ENCODE measurements at regions of chr6 and their contacts with region 1.

Region 1: DNA sequence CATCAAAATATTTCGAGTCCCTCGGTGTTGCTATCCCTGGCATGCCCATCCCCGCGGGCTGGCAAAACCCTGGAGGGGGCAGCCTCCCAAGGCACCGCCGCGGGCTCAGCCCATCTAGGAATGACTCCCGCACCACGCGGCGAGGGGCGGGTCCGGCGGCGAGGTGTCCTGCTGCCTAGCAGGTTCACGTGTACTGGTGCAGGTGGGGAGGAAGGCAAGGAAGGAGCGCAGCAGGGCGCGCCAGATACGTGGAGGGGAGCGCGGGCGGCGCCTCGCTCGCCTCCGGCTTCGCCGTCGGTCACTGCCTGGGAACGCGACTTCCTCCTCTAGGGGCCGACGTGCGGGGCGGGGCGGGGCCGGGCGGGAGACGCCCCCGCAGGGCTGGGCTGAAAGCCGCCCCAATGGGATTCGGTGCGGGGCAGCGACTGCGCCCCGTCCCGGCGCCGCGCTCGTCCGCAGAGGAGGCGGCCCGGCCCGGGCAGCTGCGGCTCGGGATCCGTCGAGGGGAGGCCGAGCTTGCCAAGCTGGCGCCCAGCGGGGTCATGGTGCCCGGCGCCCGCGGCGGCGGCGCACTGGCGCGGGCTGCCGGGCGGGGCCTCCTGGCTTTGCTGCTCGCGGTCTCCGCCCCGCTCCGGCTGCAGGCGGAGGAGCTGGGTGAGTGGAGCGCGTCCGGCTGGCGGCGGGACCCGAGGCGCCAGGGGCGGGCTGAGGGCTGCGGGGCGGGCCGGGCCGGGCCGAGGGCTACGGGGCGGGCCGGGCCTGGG is at the start of gene DCBLD1:
- DNase-seq: peak; percentile 59 to 61 (median 60)
- H3K4me3 ChIP-seq: peak within 1 kb of the TSS; percentile 83 to 90 (median 88)
- H3K4me3 Mint-ChIP-seq: peak within 1 kb of the TSS; percentile 90 to 97
- H3K27ac ChIP-seq: peak within 1 kb of the TSS; percentile 49 to 69
- H3K27ac Mint-ChIP-seq: peak within 1 kb of the TSS; percentile 59 to 89 (median 78)
- H3K4me1 ChIP-seq: peaks cover 16 to 26% of the 10 kb centered on the region in 2 donors
- H3K4me1 Mint-ChIP-seq: peaks cover 24% of the 10 kb centered on the region
- H3K27me3 ChIP-seq: peaks cover 22 to 55% of the 10 kb centered on the region in 2 donors
- H3K27me3 Mint-ChIP-seq: peaks cover 53 to 61% (median 54%) of the 10 kb centered on the region in 3 donors
- CTCF ChIP-seq: no peak
- polyA plus RNA-seq, gene DCBLD1: 2.9 to 3.3 (median 3.1) TPM

Region 2: GRCh38 chr6:117089604-117090003 is 392.8 kb before region 1 on chr6:
- intact Hi-C with region 1: no loop called
- DNase-seq: no peak
- H3K4me3 ChIP-seq: no peak overlapping the region
- H3K4me3 Mint-ChIP-seq: no peak overlapping the region
- H3K27ac ChIP-seq: no peak overlapping the region
- H3K27ac Mint-ChIP-seq: no peak overlapping the region
- H3K4me1 ChIP-seq: no peaks in the 10 kb centered on the region
- H3K4me1 Mint-ChIP-seq: no peaks in the 10 kb centered on the region
- H3K27me3 ChIP-seq: no peaks in the 10 kb centered on the region
- H3K27me3 Mint-ChIP-seq: peaks cover 0 to 2% (median 0%) of the 10 kb centered on the region in 3 donors
- CTCF ChIP-seq: no peak

Region 3: DNA sequence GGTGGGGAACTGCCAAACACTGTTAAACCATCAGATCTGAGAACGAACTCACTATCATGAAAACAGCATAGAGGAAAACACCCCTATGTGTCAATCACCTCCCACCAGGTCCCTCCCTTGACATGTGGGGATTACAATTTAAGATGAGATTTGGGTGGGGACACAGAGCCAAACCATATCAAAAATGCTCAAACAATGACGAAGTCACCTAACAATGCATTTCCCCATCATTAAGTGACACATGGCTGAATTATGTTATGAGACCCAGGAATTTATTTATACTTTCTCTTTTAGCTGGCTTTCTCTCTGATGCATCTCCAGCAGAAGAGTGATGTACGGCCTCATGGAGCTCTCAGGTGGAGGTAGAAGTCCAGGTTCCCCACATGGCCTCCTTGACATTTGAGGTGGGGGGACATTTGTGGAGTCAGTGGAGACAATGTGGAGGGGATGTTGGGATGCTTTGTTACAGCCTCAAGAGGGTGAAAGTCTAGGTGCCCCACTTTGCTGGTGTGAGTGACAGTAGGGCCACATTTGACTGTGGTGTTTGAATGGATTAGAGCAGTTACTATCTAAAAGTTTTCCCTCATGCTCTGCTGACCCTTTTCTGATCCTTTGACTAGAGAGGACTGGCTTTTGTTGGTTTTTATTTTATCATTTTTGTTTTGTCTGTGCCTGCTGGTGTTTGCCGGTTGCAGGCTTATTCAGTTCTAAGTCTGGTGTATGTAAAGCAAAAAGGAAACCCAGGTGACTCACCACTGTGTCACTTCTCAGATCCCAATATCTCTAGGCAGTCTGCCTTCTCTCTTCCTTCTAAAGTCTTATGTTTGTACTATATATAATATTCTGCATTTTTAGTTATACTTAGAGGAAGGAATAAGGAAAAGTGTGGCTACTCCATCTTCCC is 18.4 kb before region 1 on chr6:
- intact Hi-C with region 1: no loop called
- DNase-seq: peak in 1 of 3 donors; percentile 20
- H3K4me3 ChIP-seq: no peak overlapping the region
- H3K4me3 Mint-ChIP-seq: no peak overlapping the region
- H3K27ac ChIP-seq: no peak overlapping the region
- H3K27ac Mint-ChIP-seq: peak overlapping the region in 2 of 7 donors; percentile 28 to 47
- H3K4me1 ChIP-seq: peaks cover 0 to 2% of the 10 kb centered on the region in 2 donors
- H3K4me1 Mint-ChIP-seq: peaks cover 11% of the 10 kb centered on the region
- H3K27me3 ChIP-seq: no peaks in the 10 kb centered on the region
- H3K27me3 Mint-ChIP-seq: peaks cover 2 to 5% (median 5%) of the 10 kb centered on the region in 3 donors
- CTCF ChIP-seq: no peak

Region 4: GRCh38 chr6:117602151-117602898 is 119.9 kb after region 1 on chr6 and contains the start of gene GOPC:
- intact Hi-C with region 1: loop called in 1 of 2 experiments (anchors 10 kb)
- DNase-seq: peak; percentile 98
- H3K4me3 ChIP-seq: peak within 1 kb of the TSS; percentile 81 to 96 (median 82)
- H3K4me3 Mint-ChIP-seq: peak within 1 kb of the TSS; percentile 99 to 100
- H3K27ac ChIP-seq: peak within 1 kb of the TSS; percentile 84 to 87
- H3K27ac Mint-ChIP-seq: peak within 1 kb of the TSS; percentile 92 to 99 (median 97)
- H3K4me1 ChIP-seq: peaks cover 26 to 40% of the 10 kb centered on the region in 2 donors
- H3K4me1 Mint-ChIP-seq: peaks cover 36% of the 10 kb centered on the region
- H3K27me3 ChIP-seq: no peaks in the 10 kb centered on the region
- H3K27me3 Mint-ChIP-seq: peaks cover 0 to 2% (median 2%) of the 10 kb centered on the region in 3 donors
- CTCF ChIP-seq: no peak
- polyA plus RNA-seq, gene GOPC: 2.7 to 8.0 (median 5.2) TPM

Region 5: GRCh38 chr6:117687021-117687648 is 204.7 kb after region 1 on chr6:
- intact Hi-C with region 1: loop called in 1 of 2 experiments (anchors 10 kb)
- DNase-seq: no peak
- H3K4me3 ChIP-seq: no peak overlapping the region
- H3K4me3 Mint-ChIP-seq: no peak overlapping the region
- H3K27ac ChIP-seq: peak overlapping the region in 1 of 2 donors; percentile 50
- H3K27ac Mint-ChIP-seq: peak overlapping the region in 4 of 7 donors; percentile 7 to 74 (median 26)
- H3K4me1 ChIP-seq: peaks cover 17 to 44% of the 10 kb centered on the region in 2 donors
- H3K4me1 Mint-ChIP-seq: peaks cover 54% of the 10 kb centered on the region
- H3K27me3 ChIP-seq: no peaks in the 10 kb centered on the region
- H3K27me3 Mint-ChIP-seq: no peaks in the 10 kb centered on the region
- CTCF ChIP-seq: no peak